ENCODE measurements at regions of chr6 and their contacts with region 1.

Region 1: GRCh38 chr6:30730601-30731435 is 10.7 kb downstream of the TUBB start:
- DNase-seq: peak; percentile 83
- H3K4me3 ChIP-seq: no peak overlapping the region
- H3K27ac ChIP-seq: no peak overlapping the region
- H3K4me1 ChIP-seq: peaks cover 2% of the 10 kb centered on the region
- H3K27me3 ChIP-seq: no peaks in the 10 kb centered on the region
- CTCF ChIP-seq: peak; percentile 75 to 85
- POLR2A ChIP-seq: no peak

Region 2: DNA sequence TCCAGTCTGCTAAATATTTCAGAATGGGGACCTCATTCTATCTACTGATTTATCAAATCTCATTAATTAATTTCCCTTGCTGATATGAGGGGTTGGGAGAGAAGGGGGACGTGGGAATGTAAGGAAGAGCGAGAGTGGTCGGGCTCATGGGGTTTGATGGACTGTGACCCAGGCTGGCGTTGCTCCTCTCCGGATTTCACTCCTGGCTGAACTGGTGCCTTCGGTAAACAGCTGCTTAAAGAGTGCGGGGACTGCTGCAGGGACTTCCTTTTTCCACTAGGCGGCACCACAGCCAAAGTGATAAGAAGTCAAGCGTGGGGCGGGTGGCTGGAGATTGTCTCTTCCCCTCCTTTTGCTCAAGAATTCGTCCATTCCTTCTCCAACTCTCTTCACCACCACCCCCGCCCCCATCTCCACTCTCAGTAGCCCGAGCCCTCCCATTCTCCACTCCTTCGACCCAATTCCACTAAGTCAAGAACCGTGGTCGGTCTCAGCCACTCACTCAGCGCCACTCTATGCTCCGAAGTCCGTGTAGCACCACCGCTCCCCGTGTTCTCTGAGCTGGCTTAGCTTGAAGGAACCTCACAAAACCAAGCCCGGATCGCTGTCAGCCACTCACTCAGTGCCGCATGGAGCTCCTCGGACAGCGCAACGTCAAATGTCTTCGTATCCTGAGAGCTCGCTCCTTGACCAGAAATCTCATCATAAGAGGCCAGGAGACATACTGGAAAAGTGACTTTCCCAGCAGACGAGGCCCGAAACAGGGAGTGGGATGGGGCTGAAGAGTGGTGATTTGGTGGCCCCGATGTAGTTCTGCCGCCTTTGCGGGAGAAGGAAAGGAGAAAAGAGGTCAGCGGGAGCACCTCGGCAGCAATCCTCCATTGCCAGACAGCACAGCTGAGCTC is 627.6 kb before region 1 on chr6:
- CTCF ChIA-PET with region 1: no interaction called
- POLR2A ChIA-PET with region 1: no interaction called
- dilution Hi-C with region 1: no loop called
- intact Hi-C with region 1: no loop called
- DNase-seq: peak; percentile 82
- H3K4me3 ChIP-seq: peak overlapping the region in 2 of 3 experiments; percentile 33 to 34
- H3K27ac ChIP-seq: no peak overlapping the region
- H3K4me1 ChIP-seq: peaks cover 17% of the 10 kb centered on the region
- H3K27me3 ChIP-seq: peaks cover 49 to 58% of the 10 kb centered on the region in 2 experiments
- CTCF ChIP-seq: peak; percentile 85 to 92
- POLR2A ChIP-seq: no peak

Region 3: DNA sequence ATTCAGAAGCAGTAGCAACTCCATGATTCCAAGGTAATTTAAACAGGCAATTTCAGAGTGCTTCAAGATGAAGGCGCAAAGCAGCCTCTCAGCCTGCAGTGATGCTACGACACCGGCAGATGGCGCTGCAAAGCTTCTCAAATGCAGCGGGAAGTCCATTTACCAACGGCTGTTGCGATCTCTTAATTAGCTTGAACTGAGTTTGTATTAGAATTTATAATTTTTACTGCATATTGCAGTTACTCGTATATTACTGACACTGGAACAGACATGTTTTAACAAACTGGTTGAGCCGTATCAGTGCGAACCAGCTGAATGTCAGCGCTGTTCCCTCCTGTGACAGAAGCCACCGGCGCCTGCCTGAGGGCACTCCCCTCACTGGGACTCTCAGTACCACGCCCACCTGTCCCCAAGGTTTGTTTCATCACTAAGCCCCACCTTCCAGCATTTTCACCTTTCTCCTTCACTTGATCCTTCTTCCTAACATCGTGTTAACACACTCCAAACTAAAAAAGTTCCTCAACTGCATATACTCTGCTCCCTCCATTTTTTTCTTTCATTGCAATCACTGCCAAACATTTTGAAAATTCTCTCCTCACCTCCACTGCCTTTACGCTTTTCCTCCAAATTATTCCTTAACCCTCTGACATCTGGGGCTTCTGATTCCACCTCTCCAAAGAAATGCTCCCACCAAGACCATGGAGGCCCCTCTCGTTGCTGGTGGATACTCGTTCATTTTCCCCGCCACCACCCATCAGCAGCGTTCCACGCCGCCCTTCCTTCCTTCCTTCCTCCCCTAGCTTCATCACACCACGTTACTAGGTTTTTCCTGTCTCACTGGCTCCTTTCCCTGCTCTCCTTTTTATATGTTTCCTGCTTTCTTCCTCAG is 189.1 kb before region 1 on chr6:
- CTCF ChIA-PET with region 1: interaction called, 16 read pairs
- POLR2A ChIA-PET with region 1: no interaction called
- dilution Hi-C with region 1: no loop called
- intact Hi-C with region 1: loop called (anchors 5 kb)
- DNase-seq: peak; percentile 91
- H3K4me3 ChIP-seq: peak overlapping the region; percentile 18 to 47 (median 21)
- H3K27ac ChIP-seq: peak overlapping the region; percentile 81
- H3K4me1 ChIP-seq: peaks cover 29% of the 10 kb centered on the region
- H3K27me3 ChIP-seq: no peaks in the 10 kb centered on the region
- CTCF ChIP-seq: peak; percentile 96 to 99
- POLR2A ChIP-seq: peak; percentile 55

Region 4: DNA sequence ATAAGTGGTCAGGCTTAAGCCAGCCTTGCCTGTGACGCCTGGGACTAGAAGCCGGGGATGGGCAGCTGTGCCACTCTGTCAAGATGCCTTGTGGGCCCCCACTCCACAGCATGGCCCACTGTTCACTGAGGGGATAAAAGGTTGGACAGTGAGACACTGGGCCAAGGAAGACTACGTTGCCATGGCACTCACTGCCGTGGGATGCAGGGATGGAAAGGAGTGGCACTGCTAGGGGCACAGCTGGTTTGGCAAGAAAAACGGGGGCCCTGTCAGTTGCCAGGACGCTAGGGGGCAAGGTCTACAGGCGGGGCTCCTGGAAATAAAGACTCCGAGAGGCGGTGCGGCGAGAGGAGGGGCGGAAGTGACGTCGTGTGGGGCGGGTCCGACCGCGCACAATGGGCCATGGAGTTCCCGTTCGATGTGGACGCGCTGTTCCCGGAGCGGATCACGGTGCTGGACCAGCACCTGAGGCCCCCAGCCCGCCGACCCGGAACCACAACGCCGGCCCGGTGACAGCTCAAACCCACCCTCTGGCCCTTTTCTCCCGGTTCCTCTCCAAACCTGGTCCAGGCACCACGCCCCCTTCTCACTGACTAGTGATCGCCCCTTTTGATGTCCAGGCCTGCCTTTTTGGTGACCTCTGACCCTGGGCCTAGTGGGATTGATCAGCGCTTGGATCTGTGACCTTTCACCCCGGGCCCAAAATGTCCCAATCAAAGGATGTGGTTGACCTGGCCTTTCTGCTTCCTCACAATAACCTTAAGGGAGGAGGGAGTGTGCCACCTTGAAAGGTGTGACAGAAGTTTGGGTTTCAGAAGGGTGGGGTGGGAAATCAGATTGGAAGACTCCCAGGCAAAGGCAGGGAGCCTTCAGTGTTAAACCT is 104.1 kb before region 1 on chr6 and contains the start of gene ATAT1:
- CTCF ChIA-PET with region 1: interaction called, 13 read pairs
- POLR2A ChIA-PET with region 1: no interaction called
- dilution Hi-C with region 1: no loop called
- intact Hi-C with region 1: no loop called
- DNase-seq: peak; percentile 89
- H3K4me3 ChIP-seq: peak within 1 kb of the TSS; percentile 22 to 64 (median 51)
- H3K27ac ChIP-seq: peak within 1 kb of the TSS; percentile 66
- H3K4me1 ChIP-seq: peaks cover 8% of the 10 kb centered on the region
- H3K27me3 ChIP-seq: no peaks in the 10 kb centered on the region
- CTCF ChIP-seq: peak; percentile 31 to 50
- POLR2A ChIP-seq: peak; percentile 97
- total RNA-seq, gene ATAT1: 18.4 and 20.2 TPM in 2 replicates

Region 5: DNA sequence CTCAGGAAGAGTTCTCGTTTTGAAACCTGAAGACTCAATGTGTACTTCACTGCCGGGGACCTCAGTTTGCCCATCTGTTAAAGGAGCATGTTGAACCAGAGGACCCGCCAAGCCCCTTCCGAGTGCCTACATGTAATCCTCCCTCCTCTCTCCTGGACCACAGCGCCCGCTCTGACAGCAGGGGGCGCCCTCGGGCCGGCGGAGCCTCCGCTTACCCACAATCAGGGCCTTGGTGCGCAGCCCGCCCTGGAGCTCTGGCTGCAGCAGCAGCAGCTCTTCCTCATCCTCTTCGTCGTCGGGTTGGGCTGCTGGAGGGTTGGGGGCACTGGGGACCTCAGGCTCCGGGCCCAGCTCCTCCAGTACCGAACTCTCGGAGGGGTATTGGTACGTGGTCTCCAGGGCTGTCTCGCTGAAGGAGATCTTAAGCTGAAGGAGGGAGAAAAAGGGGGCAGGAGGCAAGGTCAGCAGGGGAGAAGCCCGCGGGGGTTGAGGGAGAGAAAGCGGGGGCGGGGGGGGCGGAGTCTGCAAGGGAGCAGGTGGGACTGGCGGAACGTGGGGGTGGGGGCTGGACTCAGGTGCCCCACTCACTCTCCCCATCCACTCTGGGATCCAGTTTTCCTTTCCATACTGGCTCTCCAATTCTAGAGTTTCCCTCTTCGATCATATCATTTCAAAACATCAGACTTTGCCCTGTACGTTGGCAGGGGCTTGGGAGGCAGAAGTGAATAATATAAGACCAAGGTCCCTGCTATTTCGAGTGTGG is 51.7 kb before region 1 on chr6:
- CTCF ChIA-PET with region 1: interaction called, 296 read pairs
- POLR2A ChIA-PET with region 1: interaction called, 8 read pairs
- dilution Hi-C with region 1: no loop called
- intact Hi-C with region 1: no loop called
- DNase-seq: peak; percentile 85
- H3K4me3 ChIP-seq: peak overlapping the region in 2 of 3 experiments; percentile 8 to 27
- H3K27ac ChIP-seq: peak overlapping the region; percentile 2
- H3K4me1 ChIP-seq: peaks cover 31% of the 10 kb centered on the region
- H3K27me3 ChIP-seq: no peaks in the 10 kb centered on the region
- CTCF ChIP-seq: peak; percentile 95 to 96
- POLR2A ChIP-seq: no peak

Region 6: DNA sequence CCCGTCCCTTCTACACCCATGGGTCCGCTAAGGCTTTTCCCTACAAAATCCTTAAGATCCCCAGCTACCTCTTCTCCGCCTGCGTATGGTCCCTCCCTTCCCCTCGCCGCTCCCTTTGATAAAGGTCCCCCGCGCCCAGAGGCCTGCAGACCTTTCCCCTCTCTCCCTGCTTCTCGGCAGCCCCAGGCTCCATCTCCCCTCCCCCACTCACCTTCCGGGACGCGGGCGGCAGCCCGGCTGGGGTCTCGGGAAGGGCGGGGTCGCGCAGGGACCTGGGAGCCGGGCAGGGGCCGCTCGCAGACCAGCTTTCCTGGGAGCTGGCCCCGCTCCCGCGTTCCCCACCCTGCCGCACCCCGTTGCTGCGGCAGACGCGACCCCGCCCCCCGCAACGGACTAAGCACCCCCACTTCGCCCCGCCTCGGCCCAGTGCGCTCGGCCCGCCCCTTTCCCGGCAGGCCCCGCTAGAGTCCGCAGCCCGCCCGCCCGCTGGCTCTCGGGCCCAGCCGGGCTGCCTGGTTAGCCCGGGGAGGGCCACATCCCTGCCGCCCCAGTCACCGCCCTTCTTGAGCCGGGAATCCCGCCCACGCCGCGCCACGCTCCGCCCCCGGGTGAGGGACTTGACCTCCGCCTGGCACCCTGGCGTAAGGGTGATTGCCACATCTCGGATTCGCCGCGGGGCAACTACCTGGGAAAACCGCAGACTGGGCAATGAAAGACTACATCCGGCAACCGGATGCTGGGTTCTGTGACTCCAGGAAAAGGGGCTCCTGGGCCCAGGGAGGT is 11.7 kb after region 1 on chr6 and contains the start of gene FLOT1:
- CTCF ChIA-PET with region 1: interaction called, 13 read pairs
- POLR2A ChIA-PET with region 1: interaction called, 3 read pairs
- dilution Hi-C with region 1: no loop called
- intact Hi-C with region 1: no loop called
- DNase-seq: peak; percentile 94
- H3K4me3 ChIP-seq: peak within 1 kb of the TSS; percentile 37 to 83 (median 80)
- H3K27ac ChIP-seq: peak within 1 kb of the TSS; percentile 89
- H3K4me1 ChIP-seq: peaks cover 47% of the 10 kb centered on the region
- H3K27me3 ChIP-seq: no peaks in the 10 kb centered on the region
- CTCF ChIP-seq: no peak
- POLR2A ChIP-seq: peak; percentile 83
- total RNA-seq, gene FLOT1: 141 and 145 TPM in 2 replicates

Region 7: DNA sequence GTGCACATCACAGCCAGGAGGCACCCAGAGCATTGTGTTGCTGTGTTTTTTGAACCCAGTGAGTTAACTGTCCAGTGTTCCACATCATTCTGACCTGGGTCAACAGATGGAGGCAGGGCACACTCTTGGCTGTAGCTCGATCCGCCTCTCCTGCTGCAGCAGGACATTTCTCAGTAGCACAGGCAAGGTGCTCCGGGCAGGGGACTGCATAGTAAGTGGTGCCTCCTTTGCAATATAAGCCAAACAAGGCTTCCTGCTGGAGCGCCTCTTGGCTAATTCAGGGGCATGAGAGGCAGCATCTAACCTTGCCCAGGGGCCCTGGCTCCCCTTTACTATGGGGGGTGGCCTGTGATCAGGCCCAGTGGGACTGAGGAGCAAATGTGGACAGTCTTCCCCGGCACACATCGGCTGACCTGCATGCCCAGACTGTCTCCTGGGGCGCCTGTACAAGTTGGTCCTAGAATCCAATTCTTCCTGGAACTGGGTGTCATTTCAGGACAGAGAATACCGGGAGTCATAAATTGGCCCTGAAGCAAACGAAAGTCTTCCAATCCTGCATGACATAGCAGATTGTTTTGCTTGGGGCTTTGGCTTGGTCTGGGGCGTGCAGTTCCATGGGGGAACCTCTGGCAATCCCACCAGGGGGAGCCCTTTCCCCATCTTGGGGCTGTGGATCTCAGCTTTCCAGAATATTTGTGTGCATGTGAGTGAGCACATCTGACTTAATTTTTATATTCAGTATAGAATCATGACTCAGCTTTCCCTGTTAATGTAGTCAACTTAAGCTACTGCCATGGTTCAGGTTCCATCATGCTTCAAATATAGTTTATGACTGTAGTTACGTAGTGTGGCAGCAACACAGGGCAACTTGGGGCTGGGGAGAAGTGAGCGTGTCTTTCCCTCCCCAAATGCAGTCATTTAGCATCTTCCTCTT is 97.5 kb after region 1 on chr6:
- CTCF ChIA-PET with region 1: interaction called, 29 read pairs
- POLR2A ChIA-PET with region 1: no interaction called
- dilution Hi-C with region 1: no loop called
- intact Hi-C with region 1: no loop called
- DNase-seq: peak; percentile 92
- H3K4me3 ChIP-seq: no peak overlapping the region
- H3K27ac ChIP-seq: no peak overlapping the region
- H3K4me1 ChIP-seq: peaks cover 15% of the 10 kb centered on the region
- H3K27me3 ChIP-seq: no peaks in the 10 kb centered on the region
- CTCF ChIP-seq: peak; percentile 89
- POLR2A ChIP-seq: no peak

Region 8: DNA sequence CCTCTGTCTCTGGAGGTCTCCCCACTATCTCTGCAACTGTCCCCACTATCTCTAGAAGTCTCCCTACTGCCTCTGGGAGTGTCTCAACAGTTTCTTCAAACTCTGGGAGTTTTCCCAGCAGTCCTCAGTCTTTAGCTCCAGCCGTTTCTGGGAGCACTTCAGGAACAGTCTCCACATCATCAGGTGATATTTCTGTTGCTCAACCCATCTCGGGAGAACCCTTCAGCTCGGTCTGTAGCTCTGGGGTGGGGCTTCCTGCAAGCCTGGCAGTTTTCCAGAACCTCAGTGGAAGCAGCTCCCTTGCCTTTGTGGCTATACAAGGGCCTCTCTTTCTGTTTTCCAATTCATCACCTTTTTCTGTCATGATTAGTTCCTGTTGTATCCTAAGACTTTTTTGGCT is 204.2 kb after region 1 on chr6:
- CTCF ChIA-PET with region 1: no interaction called
- POLR2A ChIA-PET with region 1: no interaction called
- dilution Hi-C with region 1: no loop called
- intact Hi-C with region 1: no loop called
- DNase-seq: no peak
- H3K4me3 ChIP-seq: no peak overlapping the region
- H3K27ac ChIP-seq: no peak overlapping the region
- H3K4me1 ChIP-seq: no peaks in the 10 kb centered on the region
- H3K27me3 ChIP-seq: peaks cover 0 to 7% of the 10 kb centered on the region in 2 experiments
- CTCF ChIP-seq: no peak
- POLR2A ChIP-seq: no peak

Region 9: GRCh38 chr6:30955367-30956042 is 224.7 kb after region 1 on chr6:
- CTCF ChIA-PET with region 1: no interaction called
- POLR2A ChIA-PET with region 1: no interaction called
- dilution Hi-C with region 1: no loop called
- intact Hi-C with region 1: no loop called
- DNase-seq: no peak
- H3K4me3 ChIP-seq: peak overlapping the region in 2 of 3 experiments; percentile 22 to 45
- H3K27ac ChIP-seq: no peak overlapping the region
- H3K4me1 ChIP-seq: peaks cover 5% of the 10 kb centered on the region
- H3K27me3 ChIP-seq: peaks cover 50 to 53% of the 10 kb centered on the region in 2 experiments
- CTCF ChIP-seq: no peak
- POLR2A ChIP-seq: no peak

Region 10: GRCh38 chr6:31068669-31069340 is 338.0 kb after region 1 on chr6:
- CTCF ChIA-PET with region 1: interaction called, 10 read pairs
- POLR2A ChIA-PET with region 1: no interaction called
- dilution Hi-C with region 1: no loop called
- intact Hi-C with region 1: no loop called
- DNase-seq: peak; percentile 73
- H3K4me3 ChIP-seq: no peak overlapping the region
- H3K27ac ChIP-seq: no peak overlapping the region
- H3K4me1 ChIP-seq: peaks cover 6% of the 10 kb centered on the region
- H3K27me3 ChIP-seq: peaks cover 5 to 8% of the 10 kb centered on the region in 2 experiments
- CTCF ChIP-seq: peak; percentile 82 to 91
- POLR2A ChIP-seq: no peak